ENCODE measurements at regions of chr14 and their contacts with region 1.

Region 1: GRCh38 chr14:93619176-93619793 is 169.0 kb downstream of the PRIMA1 start:
- DNase-seq: peak in 1 of 2 experiments; percentile 7
- H3K4me3 ChIP-seq: no peak overlapping the region
- H3K27ac ChIP-seq: no peak overlapping the region
- H3K4me1 ChIP-seq: no peaks in the 10 kb centered on the region
- H3K27me3 ChIP-seq: peaks cover 50% of the 10 kb centered on the region
- CTCF ChIP-seq: peak; percentile 69

Region 2: GRCh38 chr14:92880869-92881289 is 738.4 kb before region 1 on chr14:
- CTCF ChIA-PET with region 1: no interaction called
- POLR2A ChIA-PET with region 1: no interaction called
- intact Hi-C with region 1: loop called (anchors 5 kb)
- DNase-seq: peak; percentile 10 to 63
- H3K4me3 ChIP-seq: peak overlapping the region; percentile 42; the same call in 1 of the 2 replicates
- H3K27ac ChIP-seq: no peak overlapping the region
- H3K4me1 ChIP-seq: peaks cover 13% of the 10 kb centered on the region
- H3K27me3 ChIP-seq: peaks cover 8% of the 10 kb centered on the region; the same call in 1 of the 2 replicates
- CTCF ChIP-seq: peak; percentile 71

Region 3: DNA sequence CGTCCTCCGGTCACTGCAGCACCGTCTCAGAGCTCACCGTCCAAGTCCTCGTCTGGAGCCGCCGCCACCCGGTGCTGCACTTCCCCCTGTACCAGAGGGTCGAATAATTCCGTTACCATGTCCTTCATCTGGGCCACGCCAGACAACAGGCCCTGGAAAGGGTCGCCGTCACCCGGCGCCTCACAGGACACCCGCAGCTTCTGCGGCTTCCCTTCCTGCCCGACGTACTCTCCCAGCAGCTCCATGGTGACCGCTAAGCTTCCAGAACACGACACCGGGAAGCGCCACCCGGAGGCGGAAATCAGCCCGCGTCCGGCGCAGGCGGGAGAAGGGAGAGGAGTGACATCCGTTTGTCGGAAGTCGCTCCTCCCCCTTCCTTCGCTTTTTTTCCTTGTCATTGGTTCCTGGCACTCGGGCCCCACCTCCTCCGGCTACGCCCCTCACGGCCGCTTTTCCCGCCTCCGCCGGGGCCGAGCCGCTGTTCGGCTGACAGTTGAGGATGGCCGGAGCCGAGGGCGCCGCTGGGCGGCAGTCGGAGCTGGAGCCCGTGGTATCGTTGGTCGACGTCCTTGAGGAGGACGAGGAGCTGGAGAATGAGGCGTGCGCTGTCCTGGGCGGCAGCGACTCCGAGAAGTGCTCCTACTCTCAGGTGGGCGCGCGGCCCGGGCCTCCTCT is 412.4 kb before region 1 on chr14 and contains the starts of genes GON7 and UBR7:
- CTCF ChIA-PET with region 1: no interaction called
- POLR2A ChIA-PET with region 1: no interaction called
- intact Hi-C with region 1: loop called (anchors 1 kb)
- DNase-seq: peak; percentile 92 to 93
- H3K4me3 ChIP-seq: peak within 1 kb of the TSS; percentile 100
- H3K27ac ChIP-seq: peak within 1 kb of the TSS; percentile 63
- H3K4me1 ChIP-seq: peaks cover 23% of the 10 kb centered on the region
- H3K27me3 ChIP-seq: no peaks in the 10 kb centered on the region
- CTCF ChIP-seq: no peak
- total RNA-seq, gene GON7: 6.4 and 9.3 TPM in 2 replicates
- total RNA-seq, gene UBR7: 9.3 and 14.3 TPM in 2 replicates

Region 4: DNA sequence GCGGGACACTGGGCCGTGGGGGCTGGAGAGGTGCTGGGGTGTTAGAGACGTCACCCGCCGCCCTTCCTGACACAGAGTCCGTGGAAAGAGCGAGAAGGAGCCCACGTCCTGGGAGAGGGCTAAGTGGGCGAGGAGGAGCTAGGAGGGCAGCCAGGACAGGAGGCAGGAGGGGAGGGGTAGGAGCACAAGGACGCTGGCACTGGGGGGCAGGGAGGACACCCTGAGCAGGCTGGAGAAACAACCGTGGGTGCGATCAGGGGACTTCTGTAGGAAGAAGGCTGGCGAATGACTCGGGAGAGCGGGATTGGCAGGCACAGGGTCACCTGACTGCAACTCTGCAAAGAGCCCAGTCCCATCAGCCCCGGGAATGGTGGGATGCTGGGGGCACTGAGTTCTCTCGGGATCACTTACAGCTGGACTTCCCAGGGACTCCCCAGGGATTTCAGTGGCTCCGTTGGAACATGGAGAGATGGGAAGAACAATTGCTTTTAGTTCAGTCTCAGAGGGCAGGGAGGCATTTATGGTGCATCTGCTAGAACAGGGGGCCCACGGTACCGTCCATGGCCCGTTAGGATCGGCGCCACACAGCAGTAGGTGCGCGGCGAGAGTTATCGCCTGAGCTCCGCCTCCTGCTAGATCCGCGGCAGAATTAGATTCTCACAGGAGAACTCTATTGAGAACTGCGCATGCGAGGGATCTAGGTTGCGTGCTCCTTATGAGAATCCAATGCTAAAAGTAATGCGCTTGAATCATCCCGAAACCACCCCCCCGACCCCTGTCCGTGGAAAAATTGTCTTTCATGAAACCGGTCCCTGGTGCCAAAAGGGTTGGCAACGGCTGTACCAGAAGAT is 387.9 kb before region 1 on chr14:
- CTCF ChIA-PET with region 1: no interaction called
- POLR2A ChIA-PET with region 1: no interaction called
- intact Hi-C with region 1: loop called (anchors 2 kb)
- DNase-seq: no peak
- H3K4me3 ChIP-seq: no peak overlapping the region
- H3K27ac ChIP-seq: no peak overlapping the region
- H3K4me1 ChIP-seq: no peaks in the 10 kb centered on the region
- H3K27me3 ChIP-seq: no peaks in the 10 kb centered on the region
- CTCF ChIP-seq: no peak